ENCODE measurements at regions of chr16 and their contacts with region 1.

Region 1: DNA sequence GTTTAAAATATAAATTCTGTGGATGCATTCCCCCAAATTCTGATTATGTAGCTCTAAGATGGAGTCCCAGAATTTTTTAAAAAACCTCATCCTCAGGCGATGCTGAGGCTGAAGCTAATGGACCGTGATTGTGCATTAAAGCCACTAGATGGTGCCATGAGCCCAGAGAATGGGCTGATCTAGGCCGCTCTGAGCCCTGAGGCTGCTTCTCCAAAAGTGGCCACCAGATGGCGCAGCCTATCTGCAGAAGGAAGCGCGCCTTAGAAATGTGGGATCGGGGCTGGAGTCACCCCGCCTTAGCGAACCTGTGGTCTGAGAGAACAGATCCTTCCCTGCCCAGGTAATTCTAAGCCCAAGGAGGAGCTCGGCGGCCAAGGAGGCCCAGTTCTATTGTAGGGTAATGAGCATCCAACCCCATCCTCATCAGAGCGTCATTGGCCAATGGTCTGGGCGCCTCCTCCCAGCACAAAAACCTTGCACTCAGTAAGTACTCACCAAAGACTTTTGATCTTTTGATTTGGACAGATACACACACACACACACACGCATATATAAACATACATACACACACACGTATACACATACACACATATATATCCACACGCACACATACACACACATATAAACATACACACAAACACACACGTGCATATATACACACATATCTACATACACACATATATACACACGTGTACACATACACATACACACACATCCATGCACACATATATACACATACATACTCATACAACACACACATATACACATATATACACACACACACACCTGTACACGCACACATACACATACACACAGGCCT is 13.7 kb upstream of the MMP2 start:
- DNase-seq: peak; percentile 72 to 82
- H3K4me3 ChIP-seq: no peak overlapping the region
- H3K27ac ChIP-seq: no peak overlapping the region
- H3K4me1 ChIP-seq: peaks cover 11% of the 10 kb centered on the region
- H3K27me3 ChIP-seq: no peaks in the 10 kb centered on the region
- CTCF ChIP-seq: peak; percentile 100

Region 2: GRCh38 chr16:55426865-55427484 is 38.3 kb before region 1 on chr16:
- CTCF ChIA-PET with region 1: no interaction called
- POLR2A ChIA-PET with region 1: no interaction called
- intact Hi-C with region 1: no loop called
- DNase-seq: no peak
- H3K4me3 ChIP-seq: no peak overlapping the region
- H3K27ac ChIP-seq: no peak overlapping the region
- H3K4me1 ChIP-seq: no peaks in the 10 kb centered on the region
- H3K27me3 ChIP-seq: peaks cover 5% of the 10 kb centered on the region; the same call in 1 of the 2 replicates
- CTCF ChIP-seq: no peak

Region 3: DNA sequence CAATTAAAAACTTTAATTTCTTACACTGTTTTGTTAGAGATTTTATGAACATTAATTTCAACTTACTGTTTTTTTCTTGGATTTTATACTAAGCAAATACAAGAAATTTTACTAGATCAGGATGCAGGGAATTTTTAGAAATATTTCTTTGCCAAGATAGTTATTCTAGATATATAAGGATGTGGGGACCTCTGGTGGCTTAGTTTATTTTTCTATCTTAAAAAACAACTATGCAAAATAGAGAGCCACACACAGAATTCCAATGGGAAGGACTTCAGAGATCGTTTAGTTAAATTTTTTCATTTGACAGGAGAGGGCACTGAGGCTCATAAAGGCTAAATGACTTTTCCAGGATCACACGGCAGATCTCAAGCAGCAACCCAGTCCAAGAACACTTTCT is 78.2 kb after region 1 on chr16:
- CTCF ChIA-PET with region 1: interaction called, 8 read pairs
- POLR2A ChIA-PET with region 1: no interaction called
- intact Hi-C with region 1: loop called (anchors 1 kb)
- DNase-seq: peak in 1 of 2 experiments; percentile 47
- H3K4me3 ChIP-seq: no peak overlapping the region
- H3K27ac ChIP-seq: no peak overlapping the region
- H3K4me1 ChIP-seq: peaks cover 10% of the 10 kb centered on the region; the same call in 1 of the 2 replicates
- H3K27me3 ChIP-seq: no peaks in the 10 kb centered on the region
- CTCF ChIP-seq: peak; percentile 74

Region 4: DNA sequence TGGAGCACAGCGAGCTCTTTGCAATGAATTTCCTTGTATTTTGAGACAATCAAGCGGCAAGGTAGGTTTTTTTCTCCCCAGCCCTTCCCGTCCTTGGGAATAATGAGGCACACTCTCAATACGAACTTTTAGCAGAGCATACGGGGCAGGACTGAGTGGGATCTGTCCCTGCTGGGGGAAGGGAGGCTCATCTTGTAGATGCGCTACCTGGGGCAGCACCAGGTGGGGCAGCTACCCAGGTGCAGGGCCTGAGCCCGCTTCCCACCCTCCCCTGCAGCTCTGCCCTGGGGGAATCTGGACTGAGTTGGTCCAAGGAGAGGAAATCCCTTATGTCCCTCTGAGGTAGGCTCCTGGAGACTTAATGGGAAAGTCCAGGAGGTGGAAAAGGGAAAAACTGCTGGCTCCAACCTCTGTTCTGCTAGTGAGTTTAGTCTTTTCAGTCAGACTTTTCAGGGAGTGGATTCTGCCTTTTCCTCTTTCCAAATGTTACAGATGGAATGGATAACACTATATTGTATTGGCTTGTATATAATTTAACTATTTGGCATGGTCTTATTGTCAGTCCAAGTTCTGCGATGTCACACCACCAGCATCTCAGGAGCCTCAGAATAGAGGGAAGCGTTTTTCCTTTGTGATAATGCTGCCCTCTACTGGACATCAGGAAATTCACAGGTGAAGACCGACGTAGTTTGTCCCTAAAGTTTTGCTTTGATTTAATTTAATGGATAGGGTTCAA is 377.2 kb after region 1 on chr16:
- CTCF ChIA-PET with region 1: no interaction called
- POLR2A ChIA-PET with region 1: no interaction called
- intact Hi-C with region 1: loop called (anchors 1 kb)
- DNase-seq: peak in 1 of 2 experiments; percentile 18
- H3K4me3 ChIP-seq: no peak overlapping the region
- H3K27ac ChIP-seq: no peak overlapping the region
- H3K4me1 ChIP-seq: peaks cover 3% of the 10 kb centered on the region; the same call in 1 of the 2 replicates
- H3K27me3 ChIP-seq: no peaks in the 10 kb centered on the region
- CTCF ChIP-seq: peak; percentile 90